Endothelial cell of umbilical vein (primary cell): ENCODE measurements at regions of chr2 and their contacts with region 1.

Region 1: DNA sequence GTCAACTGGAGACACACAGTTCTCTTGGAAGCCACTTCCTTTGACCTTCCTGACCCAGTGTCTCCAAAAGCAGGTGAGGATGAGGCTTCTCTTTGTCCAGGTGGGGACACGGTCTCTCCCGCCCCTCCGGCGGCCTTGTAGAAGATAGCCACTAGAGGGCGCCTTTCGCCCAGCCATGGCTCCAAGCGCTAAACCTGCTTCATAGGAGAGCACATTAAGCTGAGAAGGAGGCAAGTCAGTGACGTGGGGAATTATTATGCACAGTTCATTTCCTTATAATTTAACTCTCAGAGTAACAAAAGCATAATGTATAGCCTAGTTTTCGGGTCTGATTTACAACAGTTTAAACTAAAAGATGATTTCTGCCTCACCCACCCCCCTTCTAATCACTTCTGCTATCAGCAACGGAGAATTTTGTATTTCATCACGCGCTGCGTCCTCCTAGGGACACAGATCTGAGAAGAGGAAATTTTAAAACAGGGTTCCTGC is 208.7 kb downstream of the ICOS start:
- DNase-seq: peak; percentile 78
- H3K4me3 ChIP-seq: peak overlapping the region in 2 of 3 experiments; percentile 20 to 46
- H3K27ac ChIP-seq: no peak overlapping the region
- H3K4me1 ChIP-seq: peaks cover 4% of the 10 kb centered on the region
- H3K27me3 ChIP-seq: peaks cover 0 to 6% of the 10 kb centered on the region in 2 experiments
- CTCF ChIP-seq: peak; percentile 89 to 91
- POLR2A ChIP-seq: no peak

Region 2: DNA sequence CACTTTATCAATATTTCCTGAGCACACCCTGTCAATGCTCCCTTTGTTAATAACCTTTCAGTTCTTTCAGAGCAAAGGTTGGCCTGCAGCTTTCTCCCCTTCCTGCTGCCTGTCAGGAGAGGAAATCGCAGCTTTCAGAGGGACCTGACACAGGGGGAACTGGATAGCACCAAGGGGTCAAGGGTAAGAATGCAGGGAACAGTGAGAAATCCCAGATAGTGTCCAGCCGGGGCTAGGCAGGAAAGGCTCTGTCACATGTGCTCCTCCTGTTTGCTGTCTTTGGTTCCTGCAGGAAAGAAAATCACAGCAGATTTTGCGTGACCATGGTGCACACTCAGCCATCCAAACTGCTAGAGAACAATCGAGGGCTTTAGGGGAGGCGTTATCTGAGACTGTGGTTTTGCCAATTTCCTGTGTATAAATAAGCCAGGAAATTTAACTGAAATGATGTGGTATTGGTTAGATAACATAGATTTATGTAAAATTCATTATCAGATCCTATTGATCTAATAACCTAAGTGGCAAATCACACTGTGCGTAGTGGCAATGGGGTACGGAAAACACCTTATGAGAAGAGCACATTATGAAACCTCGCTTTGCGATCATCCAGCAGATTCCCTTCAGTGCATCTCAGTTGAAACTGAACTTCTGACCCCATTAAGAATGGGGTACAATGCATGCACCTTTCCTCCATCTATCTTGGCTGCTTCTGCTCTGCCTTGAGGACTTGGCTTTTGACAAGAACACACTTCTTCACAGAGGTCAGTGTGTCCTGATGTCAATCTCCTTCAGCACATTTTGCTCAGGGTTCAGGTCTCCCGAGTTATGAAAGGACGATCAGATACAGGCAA is 30.8 kb before region 1 on chr2:
- CTCF ChIA-PET with region 1: interaction called, 22 read pairs
- POLR2A ChIA-PET with region 1: interaction called, 3 read pairs
- dilution Hi-C with region 1: no loop called
- intact Hi-C with region 1: loop called (anchors 1 kb)
- DNase-seq: peak; percentile 99
- H3K4me3 ChIP-seq: peak overlapping the region in 1 of 3 experiments; percentile 11
- H3K27ac ChIP-seq: peak overlapping the region; percentile 86
- H3K4me1 ChIP-seq: peaks cover 77% of the 10 kb centered on the region
- H3K27me3 ChIP-seq: no peaks in the 10 kb centered on the region
- CTCF ChIP-seq: no peak
- POLR2A ChIP-seq: peak; percentile 73

Region 3: DNA sequence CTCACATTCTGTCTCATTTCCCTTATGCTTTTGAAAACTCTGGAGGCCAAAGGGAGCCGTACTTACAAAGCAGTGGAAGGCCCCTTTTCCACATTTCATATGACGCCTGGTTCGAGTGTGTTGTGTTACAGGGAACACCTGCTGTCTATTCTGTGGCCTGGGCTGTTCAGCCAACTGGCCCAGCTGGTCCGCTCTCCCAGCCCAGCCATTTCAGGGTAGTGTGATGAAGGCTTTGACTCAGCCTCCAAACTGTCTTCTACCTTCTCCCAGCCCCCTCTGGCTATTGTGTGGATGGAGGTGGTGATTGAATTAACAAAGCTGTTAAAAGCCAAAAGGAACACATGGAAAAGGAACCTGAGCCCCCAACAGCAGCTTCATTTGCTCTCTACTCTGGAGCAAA is 25.1 kb after region 1 on chr2:
- CTCF ChIA-PET with region 1: interaction called, 12 read pairs
- POLR2A ChIA-PET with region 1: no interaction called
- dilution Hi-C with region 1: no loop called
- intact Hi-C with region 1: no loop called
- DNase-seq: no peak
- H3K4me3 ChIP-seq: no peak overlapping the region
- H3K27ac ChIP-seq: no peak overlapping the region
- H3K4me1 ChIP-seq: no peaks in the 10 kb centered on the region
- H3K27me3 ChIP-seq: peaks cover 7 to 9% of the 10 kb centered on the region in 2 experiments
- CTCF ChIP-seq: no peak
- POLR2A ChIP-seq: no peak

Region 4: GRCh38 chr2:204260162-204260877 is 115.0 kb after region 1 on chr2:
- CTCF ChIA-PET with region 1: interaction called, 17 read pairs
- POLR2A ChIA-PET with region 1: no interaction called
- dilution Hi-C with region 1: no loop called
- intact Hi-C with region 1: loop called (anchors 1 kb)
- DNase-seq: peak; percentile 86
- H3K4me3 ChIP-seq: no peak overlapping the region
- H3K27ac ChIP-seq: no peak overlapping the region
- H3K4me1 ChIP-seq: peaks cover 6% of the 10 kb centered on the region
- H3K27me3 ChIP-seq: peaks cover 0 to 2% of the 10 kb centered on the region in 2 experiments
- CTCF ChIP-seq: peak; percentile 63 to 72
- POLR2A ChIP-seq: no peak

Region 5: DNA sequence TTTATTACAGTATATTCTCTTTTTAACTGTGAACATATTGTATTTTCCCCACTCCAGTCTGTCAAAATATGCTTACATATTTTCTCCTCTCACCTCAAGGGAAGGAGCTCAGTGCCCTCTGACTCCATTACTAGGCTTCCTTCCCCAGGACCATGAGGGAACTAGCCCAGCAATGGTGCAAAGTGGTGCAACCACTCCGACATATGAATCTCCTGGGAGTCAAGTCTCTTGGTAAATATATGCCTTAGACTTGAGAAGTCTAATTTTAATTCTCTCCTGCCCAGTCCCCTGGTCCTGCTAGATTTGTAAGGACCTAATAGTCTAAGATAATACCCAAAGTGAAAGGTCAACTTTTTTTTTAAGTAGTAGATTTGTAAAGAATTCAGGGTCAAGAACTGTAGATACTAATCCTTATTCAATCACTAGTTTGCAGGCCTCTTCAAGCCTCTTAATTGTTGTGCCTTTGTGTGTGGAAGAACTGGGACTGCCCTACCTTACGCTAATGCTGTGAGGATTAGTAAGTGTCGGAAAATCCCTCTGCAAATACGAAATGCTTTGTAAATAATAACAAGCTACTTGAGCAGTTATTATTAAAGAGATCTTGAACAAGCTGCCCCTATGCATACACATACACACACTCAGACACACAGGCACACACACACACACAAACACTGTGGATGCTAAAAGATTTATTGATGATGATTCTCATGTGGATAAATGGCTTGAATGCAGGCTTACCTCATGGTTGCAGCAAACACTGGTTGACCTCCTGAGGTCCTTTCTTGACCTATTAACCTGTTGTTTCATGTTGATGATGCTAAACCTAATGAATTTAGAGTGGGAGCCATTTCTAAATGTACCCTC is 148.8 kb after region 1 on chr2:
- CTCF ChIA-PET with region 1: no interaction called
- POLR2A ChIA-PET with region 1: no interaction called
- dilution Hi-C with region 1: no loop called
- intact Hi-C with region 1: no loop called
- DNase-seq: no peak
- H3K4me3 ChIP-seq: no peak overlapping the region
- H3K27ac ChIP-seq: no peak overlapping the region
- H3K4me1 ChIP-seq: no peaks in the 10 kb centered on the region
- H3K27me3 ChIP-seq: peaks cover 2 to 3% of the 10 kb centered on the region in 2 experiments
- CTCF ChIP-seq: no peak
- POLR2A ChIP-seq: no peak

Region 6: DNA sequence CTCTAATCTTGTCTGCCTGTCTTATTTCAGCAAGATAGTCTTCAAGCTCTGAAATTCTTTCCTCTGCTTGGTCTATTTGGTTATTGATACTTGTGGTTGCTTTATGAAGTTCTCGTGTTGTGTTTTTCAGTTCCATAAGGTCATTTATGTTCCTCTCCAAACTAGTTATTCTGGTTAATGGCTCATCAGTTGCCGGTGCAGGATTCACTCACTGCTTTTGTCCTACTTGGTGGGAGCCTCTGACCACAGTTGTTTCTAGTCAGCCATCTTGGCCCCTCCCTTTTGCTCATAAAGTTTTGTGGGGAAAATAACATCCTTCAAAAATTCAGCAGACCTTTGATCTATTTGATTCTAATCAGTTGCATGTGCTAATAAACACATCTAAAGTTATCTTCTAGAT is 241.4 kb after region 1 on chr2:
- CTCF ChIA-PET with region 1: no interaction called
- POLR2A ChIA-PET with region 1: no interaction called
- dilution Hi-C with region 1: no loop called
- intact Hi-C with region 1: no loop called
- DNase-seq: no peak
- H3K4me3 ChIP-seq: no peak overlapping the region
- H3K27ac ChIP-seq: no peak overlapping the region
- H3K4me1 ChIP-seq: no peaks in the 10 kb centered on the region
- H3K27me3 ChIP-seq: no peaks in the 10 kb centered on the region
- CTCF ChIP-seq: no peak
- POLR2A ChIP-seq: no peak

Region 7: GRCh38 chr2:205814039-205814364 is 1668.7 kb after region 1 on chr2:
- CTCF ChIA-PET with region 1: interaction called, 11 read pairs
- POLR2A ChIA-PET with region 1: no interaction called
- dilution Hi-C with region 1: no loop called
- intact Hi-C with region 1: no loop called
- DNase-seq: peak; percentile 40
- H3K4me3 ChIP-seq: no peak overlapping the region
- H3K27ac ChIP-seq: peak overlapping the region; percentile 31
- H3K4me1 ChIP-seq: peaks cover 5% of the 10 kb centered on the region
- H3K27me3 ChIP-seq: peaks cover 2 to 13% of the 10 kb centered on the region in 2 experiments
- CTCF ChIP-seq: no peak
- POLR2A ChIP-seq: no peak